Heart right ventricle (tissue), 16 donors: ENCODE measurements at regions of chr1 and their contacts with region 1.

Region 1: GRCh38 chr1:232328486-232329100 is 301.3 kb downstream of the SIPA1L2 start:
- DNase-seq: peak in 1 of 2 donors; percentile 38
- ATAC-seq: peak; percentile 53 to 87 (median 68)
- H3K4me3 ChIP-seq: no peak overlapping the region
- H3K27ac ChIP-seq: peak overlapping the region in 6 of 10 donors; percentile 6 to 56 (median 33)
- H3K4me1 ChIP-seq: peaks cover 4 to 30% (median 13%) of the 10 kb centered on the region in 9 donors
- H3K27me3 ChIP-seq: no peaks in the 10 kb centered on the region
- CTCF ChIP-seq: no peak

Region 2: DNA sequence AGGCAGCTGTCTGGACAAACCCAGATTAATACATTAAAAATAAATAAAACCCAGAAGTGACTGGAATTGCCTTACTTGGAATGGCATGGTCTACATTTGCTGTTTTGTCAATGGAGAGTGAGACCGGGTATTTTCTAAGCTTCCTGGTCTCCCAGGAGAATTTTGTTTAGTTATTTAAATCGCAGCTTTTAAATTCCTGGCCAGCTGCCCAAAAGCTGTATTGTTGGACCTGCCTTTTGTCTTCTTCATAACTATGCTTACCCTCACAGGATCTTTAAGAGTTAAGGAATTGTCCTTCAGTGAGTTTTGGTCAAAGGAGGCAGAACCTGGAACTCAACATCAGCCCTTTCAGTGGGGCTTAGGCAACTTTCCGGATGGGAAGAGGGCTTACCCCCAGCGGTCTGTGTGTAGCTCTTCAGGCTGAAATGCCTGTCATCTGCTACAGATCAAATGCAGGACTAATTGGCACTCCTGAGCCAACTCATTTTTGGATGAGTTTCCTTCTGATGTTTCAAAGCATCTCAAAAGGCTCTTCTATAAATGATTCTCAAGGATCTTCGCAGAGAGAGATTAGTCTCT is 101.3 kb before region 1 on chr1:
- intact Hi-C with region 1: no loop called
- DNase-seq: peak in 1 of 2 donors; percentile 10
- ATAC-seq: no peak
- H3K4me3 ChIP-seq: no peak overlapping the region
- H3K27ac ChIP-seq: no peak overlapping the region
- H3K4me1 ChIP-seq: peaks cover 0 to 17% (median 10%) of the 10 kb centered on the region in 9 donors
- H3K27me3 ChIP-seq: peaks cover 0 to 16% (median 0%) of the 10 kb centered on the region in 7 donors
- CTCF ChIP-seq: no peak

Region 3: GRCh38 chr1:232403017-232403714 is 74.6 kb after region 1 on chr1:
- intact Hi-C with region 1: loop called in 1 of 10 experiments (anchors 10 kb)
- DNase-seq: peak; percentile 25 to 29
- ATAC-seq: peak; percentile 29 to 80 (median 70)
- H3K4me3 ChIP-seq: no peak overlapping the region
- H3K27ac ChIP-seq: peak overlapping the region in 6 of 10 donors; percentile 17 to 56 (median 32)
- H3K4me1 ChIP-seq: peaks cover 0 to 37% (median 8%) of the 10 kb centered on the region in 9 donors
- H3K27me3 ChIP-seq: no peaks in the 10 kb centered on the region
- CTCF ChIP-seq: peak in 3 of 9 donors; percentile 23 to 33 (median 23)